Caco-2 (cell line): ENCODE measurements at regions of chr10 and their contacts with region 1.

Region 1: DNA sequence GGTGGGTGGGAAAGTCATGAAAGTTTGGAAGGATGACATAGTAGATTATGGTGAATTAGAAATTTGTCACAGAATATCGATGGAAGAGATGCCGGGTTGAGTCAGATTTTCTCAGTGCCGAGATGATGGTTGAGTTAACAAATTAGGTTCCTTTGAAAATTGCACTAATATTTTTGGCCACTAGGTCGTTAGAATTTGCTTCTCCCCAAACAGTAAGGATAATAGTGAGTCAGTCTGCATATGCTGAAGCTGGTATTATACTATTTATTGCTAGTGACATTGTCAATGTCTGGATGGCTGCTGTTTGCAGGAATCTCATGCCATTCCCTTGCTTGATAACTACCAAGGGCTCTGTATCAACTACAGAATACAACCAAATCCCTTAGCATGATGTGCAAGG is 37.7 kb upstream of the MINDY3 start:
- DNase-seq: peak in 1 of 2 experiments; percentile 13
- H3K4me3 ChIP-seq: no peak overlapping the region
- H3K4me3 Mint-ChIP-seq: no peak overlapping the region
- H3K27ac Mint-ChIP-seq: no peak overlapping the region
- H3K4me1 ChIP-seq: no peaks in the 10 kb centered on the region
- H3K4me1 Mint-ChIP-seq: peaks cover 7% of the 10 kb centered on the region
- H3K27me3 ChIP-seq: peaks cover 3% of the 10 kb centered on the region; the same call in 1 of the 2 replicates
- H3K27me3 Mint-ChIP-seq: peaks cover 12% of the 10 kb centered on the region
- CTCF ChIP-seq: peak; percentile 34 to 41

Region 2: GRCh38 chr10:16116404-16117304 is 218.6 kb after region 1 on chr10:
- CTCF ChIA-PET with region 1: no interaction called
- POLR2A ChIA-PET with region 1: no interaction called
- intact Hi-C with region 1: loop called (anchors 10 kb)
- DNase-seq: peak in 1 of 2 experiments; percentile 47
- H3K4me3 ChIP-seq: no peak overlapping the region
- H3K4me3 Mint-ChIP-seq: no peak overlapping the region
- H3K27ac Mint-ChIP-seq: no peak overlapping the region
- H3K4me1 ChIP-seq: no peaks in the 10 kb centered on the region
- H3K4me1 Mint-ChIP-seq: no peaks in the 10 kb centered on the region
- H3K27me3 ChIP-seq: no peaks in the 10 kb centered on the region
- H3K27me3 Mint-ChIP-seq: peaks cover 15% of the 10 kb centered on the region
- CTCF ChIP-seq: peak; percentile 75 to 80

Region 3: GRCh38 chr10:16155834-16156233 is 257.8 kb after region 1 on chr10:
- CTCF ChIA-PET with region 1: no interaction called
- POLR2A ChIA-PET with region 1: no interaction called
- intact Hi-C with region 1: loop called (anchors 10 kb)
- DNase-seq: no peak
- H3K4me3 ChIP-seq: no peak overlapping the region
- H3K4me3 Mint-ChIP-seq: no peak overlapping the region
- H3K27ac Mint-ChIP-seq: no peak overlapping the region
- H3K4me1 ChIP-seq: peaks cover 4% of the 10 kb centered on the region; the same call in 1 of the 2 replicates
- H3K4me1 Mint-ChIP-seq: peaks cover 8% of the 10 kb centered on the region
- H3K27me3 ChIP-seq: no peaks in the 10 kb centered on the region
- H3K27me3 Mint-ChIP-seq: peaks cover 20% of the 10 kb centered on the region
- CTCF ChIP-seq: no peak

Region 4: DNA sequence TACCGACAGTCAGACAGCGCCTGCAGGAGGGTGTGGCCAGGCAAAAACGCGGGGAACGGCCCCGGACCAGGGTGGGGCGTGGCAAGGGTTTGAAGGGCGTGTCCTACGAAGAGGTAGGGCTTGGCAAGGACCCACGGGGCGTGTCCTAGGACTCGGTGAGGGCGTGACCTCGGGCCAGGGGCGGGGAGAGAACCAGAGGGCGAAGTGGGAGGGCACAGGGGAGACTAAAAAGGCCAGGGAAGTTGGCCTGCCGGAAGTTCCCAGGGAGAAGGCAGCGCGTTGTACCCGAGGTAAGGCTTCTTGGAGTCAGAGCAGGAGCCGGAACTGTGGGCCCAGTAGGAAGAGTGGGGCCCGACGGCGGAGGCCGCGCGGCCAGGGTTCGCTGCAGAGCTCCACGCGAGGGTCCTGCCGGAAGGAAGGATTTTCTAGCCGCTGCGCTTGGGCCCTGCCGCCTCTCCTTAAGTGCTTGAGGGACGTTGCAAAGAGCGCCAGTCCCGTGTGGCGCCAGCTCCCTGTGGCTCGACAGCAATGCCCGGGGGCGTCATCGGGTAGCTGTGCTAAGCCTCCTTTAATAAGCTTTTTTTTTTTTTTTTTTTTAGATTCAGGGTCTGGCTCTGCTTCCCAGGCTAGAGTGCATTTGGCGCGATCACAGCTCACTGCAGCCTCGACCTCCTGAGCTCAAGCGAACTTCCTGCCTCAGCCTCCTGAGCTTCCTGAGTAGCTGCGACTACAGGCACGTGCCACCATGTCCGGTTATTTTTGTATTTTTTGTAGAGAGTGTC is 538.9 kb after region 1 on chr10 and contains the start of gene PTER:
- CTCF ChIA-PET with region 1: interaction called, 3 read pairs
- POLR2A ChIA-PET with region 1: no interaction called
- intact Hi-C with region 1: loop called (anchors 10 kb)
- DNase-seq: peak; percentile 100
- H3K4me3 ChIP-seq: peak within 1 kb of the TSS; percentile 58
- H3K4me3 Mint-ChIP-seq: peak within 1 kb of the TSS; percentile 86
- H3K27ac Mint-ChIP-seq: peak within 1 kb of the TSS; percentile 85
- H3K4me1 ChIP-seq: peaks cover 7% of the 10 kb centered on the region
- H3K4me1 Mint-ChIP-seq: peaks cover 6% of the 10 kb centered on the region
- H3K27me3 ChIP-seq: no peaks in the 10 kb centered on the region
- H3K27me3 Mint-ChIP-seq: peaks cover 6% of the 10 kb centered on the region
- CTCF ChIP-seq: no peak
- total RNA-seq, gene PTER: 25.8 and 27.4 TPM in 2 replicates